Dendritic cell treated with granulocyte-macrophage colony-stimulating factor and Interleukin-4, amounts not matched to agents 40 ng/mL and 50 ng/mL, for 4 days (primary cell): ENCODE measurements at regions of chr10 and their contacts with region 1.

Region 1: GRCh38 chr10:72331601-72332422 is 22.9 kb downstream of the DNAJB12 start:
- H3K4me3 Mint-ChIP-seq: peak overlapping the region; percentile 30
- H3K27ac Mint-ChIP-seq: peak overlapping the region; percentile 89
- H3K4me1 Mint-ChIP-seq: peaks cover 95% of the 10 kb centered on the region
- H3K27me3 Mint-ChIP-seq: peaks cover 5% of the 10 kb centered on the region

Region 2: GRCh38 chr10:72048450-72049124 is 283.2 kb before region 1 on chr10:
- intact Hi-C with region 1: loop called (anchors 10 kb)
- H3K4me3 Mint-ChIP-seq: no peak overlapping the region
- H3K27ac Mint-ChIP-seq: no peak overlapping the region
- H3K4me1 Mint-ChIP-seq: no peaks in the 10 kb centered on the region
- H3K27me3 Mint-ChIP-seq: peaks cover 1% of the 10 kb centered on the region

Region 3: DNA sequence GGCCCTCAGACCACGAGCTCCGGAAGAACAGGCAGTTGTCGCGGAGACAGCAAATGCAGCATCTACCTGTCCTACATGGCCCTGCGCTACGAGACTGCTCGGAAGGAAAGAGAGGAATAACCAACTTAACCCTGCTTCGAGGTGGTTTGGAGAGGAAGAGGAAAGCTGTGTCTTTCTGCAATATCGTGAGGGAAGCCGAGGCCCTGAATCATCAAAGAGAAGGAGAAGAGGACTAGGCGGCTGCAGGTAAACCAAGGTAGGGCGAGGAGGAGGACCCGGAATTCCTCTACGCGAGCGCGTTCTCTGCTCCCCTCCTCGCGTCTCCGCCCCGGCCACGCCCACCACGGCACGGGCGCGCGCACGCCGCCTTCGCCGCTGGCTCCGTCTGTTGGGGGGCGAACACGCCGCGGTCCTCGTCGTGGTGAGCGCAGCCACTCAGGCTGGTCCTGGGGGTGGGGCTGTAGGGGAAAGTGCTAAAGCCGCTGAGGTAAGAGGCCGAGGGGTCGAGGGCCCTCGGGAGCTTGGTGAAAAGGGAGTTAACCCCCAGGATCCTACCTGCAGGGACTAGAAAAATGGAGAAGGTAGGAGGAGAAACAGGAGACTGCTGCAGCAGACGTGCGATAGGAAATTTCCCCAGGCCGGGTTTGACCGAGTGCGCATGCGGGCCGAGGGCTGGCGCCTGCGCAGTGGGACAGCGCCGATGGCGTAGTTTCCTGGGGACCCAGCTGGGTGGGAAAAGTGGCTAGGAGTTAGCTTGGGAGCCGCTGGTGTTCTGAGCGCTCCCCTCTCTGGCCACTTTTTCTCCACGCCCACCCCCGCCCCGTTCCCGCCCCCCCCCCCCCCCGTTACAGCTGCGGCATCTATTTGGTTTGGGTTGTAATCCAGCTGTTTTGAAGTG is 115.9 kb before region 1 on chr10 and contains the starts of genes ANAPC16 and ASCC1:
- intact Hi-C with region 1: loop called (anchors 5 kb)
- H3K4me3 Mint-ChIP-seq: peak within 1 kb of the TSS; percentile 96
- H3K27ac Mint-ChIP-seq: peak within 1 kb of the TSS; percentile 97
- H3K4me1 Mint-ChIP-seq: peaks cover 32% of the 10 kb centered on the region
- H3K27me3 Mint-ChIP-seq: no peaks in the 10 kb centered on the region

Region 4: GRCh38 chr10:72254813-72255568 is 76.8 kb before region 1 on chr10:
- intact Hi-C with region 1: loop called (anchors 5 kb)
- H3K4me3 Mint-ChIP-seq: peak overlapping the region; percentile 63
- H3K27ac Mint-ChIP-seq: no peak overlapping the region
- H3K4me1 Mint-ChIP-seq: peaks cover 42% of the 10 kb centered on the region
- H3K27me3 Mint-ChIP-seq: peaks cover 37% of the 10 kb centered on the region

Region 5: DNA sequence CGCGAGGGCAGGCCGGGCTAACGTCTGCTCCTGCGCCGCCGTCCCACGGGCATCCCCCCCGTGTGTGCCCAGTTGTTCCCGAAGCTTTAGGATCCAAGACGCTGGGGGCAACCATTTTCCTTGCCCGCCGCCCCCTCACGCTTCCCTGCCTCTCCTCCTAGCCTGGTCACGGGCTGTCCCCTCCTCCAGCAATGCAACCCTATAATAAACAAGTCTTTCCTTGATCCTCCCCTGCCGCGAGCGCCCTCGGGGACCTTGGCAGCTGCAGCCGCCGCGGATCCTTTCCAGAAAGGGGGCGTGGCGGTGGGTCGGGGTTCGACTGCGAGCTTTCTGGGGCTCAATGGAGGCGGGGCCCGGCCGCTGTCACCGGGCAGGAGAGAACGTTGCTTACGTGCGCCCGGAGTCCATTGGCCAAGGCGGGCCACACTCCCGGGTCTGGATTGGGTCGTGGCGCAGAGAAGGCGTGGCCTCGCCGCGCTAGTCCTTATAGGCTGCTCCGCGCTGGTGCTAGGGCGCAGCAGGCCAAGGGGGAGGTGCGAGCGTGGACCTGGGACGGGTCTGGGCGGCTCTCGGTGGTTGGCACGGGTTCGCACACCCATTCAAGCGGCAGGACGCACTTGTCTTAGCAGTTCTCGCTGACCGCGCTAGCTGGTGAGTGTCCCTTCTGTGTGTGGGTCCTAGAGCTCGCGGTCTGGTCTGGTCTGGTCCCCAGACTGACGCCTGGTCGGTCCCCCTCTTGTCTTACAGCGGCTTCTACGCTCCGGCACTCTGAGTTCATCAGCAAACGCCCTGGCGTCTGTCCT is 58.2 kb before region 1 on chr10 and contains the start of gene DDIT4:
- intact Hi-C with region 1: loop called (anchors 5 kb)
- H3K4me3 Mint-ChIP-seq: peak within 1 kb of the TSS; percentile 93
- H3K27ac Mint-ChIP-seq: peak within 1 kb of the TSS; percentile 71
- H3K4me1 Mint-ChIP-seq: peaks cover 57% of the 10 kb centered on the region
- H3K27me3 Mint-ChIP-seq: peaks cover 15% of the 10 kb centered on the region

Region 6: DNA sequence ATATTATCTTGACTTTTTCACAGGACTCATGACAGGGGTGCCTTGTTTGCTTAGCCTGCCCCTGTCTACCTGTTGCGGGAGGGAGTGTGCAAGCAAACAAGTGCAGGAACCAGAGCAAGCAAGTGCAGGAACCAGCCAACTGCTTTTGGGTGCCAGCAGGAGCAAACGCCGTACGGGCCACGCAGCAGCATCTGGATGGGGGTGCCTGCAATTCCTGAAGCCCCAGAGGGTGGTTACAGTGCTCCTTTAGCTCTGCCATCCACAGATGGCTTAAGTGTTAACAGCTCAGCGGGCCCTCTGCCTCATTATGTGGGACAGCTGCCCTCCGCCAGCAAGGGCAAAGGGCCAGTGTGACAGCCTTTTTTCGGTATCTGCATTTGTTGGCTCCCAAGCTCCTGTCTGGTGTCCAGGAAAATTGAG is 210.6 kb after region 1 on chr10:
- intact Hi-C with region 1: no loop called
- H3K4me3 Mint-ChIP-seq: no peak overlapping the region
- H3K27ac Mint-ChIP-seq: no peak overlapping the region
- H3K4me1 Mint-ChIP-seq: peaks cover 41% of the 10 kb centered on the region
- H3K27me3 Mint-ChIP-seq: no peaks in the 10 kb centered on the region